ENCODE measurements at regions of chr19 and their contacts with region 1.

Region 1: GRCh38 chr19:4951656-4952055 is 17.3 kb upstream of the KDM4B start:
- DNase-seq: no peak
- ATAC-seq: no peak
- H3K4me3 ChIP-seq: no peak overlapping the region
- H3K27ac ChIP-seq: no peak overlapping the region
- H3K4me1 ChIP-seq: no peaks in the 10 kb centered on the region
- H3K27me3 ChIP-seq: no peaks in the 10 kb centered on the region
- CTCF ChIP-seq: no peak

Region 2: GRCh38 chr19:4966591-4966990 is 14.9 kb after region 1 on chr19:
- CTCF ChIA-PET with region 1: no interaction called
- POLR2A ChIA-PET with region 1: no interaction called
- intact Hi-C with region 1: no loop called
- DNase-seq: no peak
- ATAC-seq: no peak
- H3K4me3 ChIP-seq: no peak overlapping the region
- H3K27ac ChIP-seq: no peak overlapping the region
- H3K4me1 ChIP-seq: peaks cover 13% of the 10 kb centered on the region
- H3K27me3 ChIP-seq: no peaks in the 10 kb centered on the region
- CTCF ChIP-seq: no peak

Region 3: DNA sequence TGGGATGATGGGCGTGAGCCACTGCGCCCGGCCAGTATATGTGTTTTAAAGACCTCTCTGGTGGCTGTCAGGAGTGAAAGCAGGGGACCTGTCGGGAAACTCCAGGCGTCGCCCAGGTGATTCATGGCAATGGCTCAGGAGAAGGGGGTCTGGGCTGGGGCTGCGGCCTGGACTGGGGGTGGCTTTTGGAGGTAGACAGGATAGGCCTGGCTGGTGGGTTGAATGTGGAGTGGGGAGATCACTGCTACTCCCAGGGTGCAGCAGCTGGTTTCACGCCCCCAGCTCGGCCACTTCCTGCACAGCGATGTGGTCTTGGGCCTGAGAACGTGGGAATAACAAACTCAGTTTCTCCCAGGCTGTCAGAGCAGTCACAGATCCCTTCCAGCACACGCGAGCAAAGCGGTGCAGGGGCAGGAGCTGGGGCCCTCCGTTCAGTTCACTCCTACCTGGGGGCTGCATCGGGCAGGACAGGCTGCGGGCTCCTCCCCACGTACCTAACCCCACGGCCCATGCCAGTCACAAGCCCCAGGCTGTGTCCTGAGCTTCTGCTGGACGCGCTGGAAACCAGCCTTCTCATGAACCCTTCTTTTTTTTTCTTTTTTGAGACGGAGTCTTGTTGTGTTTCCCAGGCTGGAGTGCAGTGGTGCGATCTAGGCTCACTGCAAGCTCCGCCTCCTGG is 36.2 kb after region 1 on chr19:
- CTCF ChIA-PET with region 1: no interaction called
- POLR2A ChIA-PET with region 1: interaction called, 11 read pairs
- intact Hi-C with region 1: no loop called
- DNase-seq: no peak
- ATAC-seq: no peak
- H3K4me3 ChIP-seq: no peak overlapping the region
- H3K27ac ChIP-seq: no peak overlapping the region
- H3K4me1 ChIP-seq: no peaks in the 10 kb centered on the region
- H3K27me3 ChIP-seq: no peaks in the 10 kb centered on the region
- CTCF ChIP-seq: no peak

Measured in PC-3 (cell line).